ENCODE measurements at regions of chr18 and their contacts with region 1.

Region 1: DNA sequence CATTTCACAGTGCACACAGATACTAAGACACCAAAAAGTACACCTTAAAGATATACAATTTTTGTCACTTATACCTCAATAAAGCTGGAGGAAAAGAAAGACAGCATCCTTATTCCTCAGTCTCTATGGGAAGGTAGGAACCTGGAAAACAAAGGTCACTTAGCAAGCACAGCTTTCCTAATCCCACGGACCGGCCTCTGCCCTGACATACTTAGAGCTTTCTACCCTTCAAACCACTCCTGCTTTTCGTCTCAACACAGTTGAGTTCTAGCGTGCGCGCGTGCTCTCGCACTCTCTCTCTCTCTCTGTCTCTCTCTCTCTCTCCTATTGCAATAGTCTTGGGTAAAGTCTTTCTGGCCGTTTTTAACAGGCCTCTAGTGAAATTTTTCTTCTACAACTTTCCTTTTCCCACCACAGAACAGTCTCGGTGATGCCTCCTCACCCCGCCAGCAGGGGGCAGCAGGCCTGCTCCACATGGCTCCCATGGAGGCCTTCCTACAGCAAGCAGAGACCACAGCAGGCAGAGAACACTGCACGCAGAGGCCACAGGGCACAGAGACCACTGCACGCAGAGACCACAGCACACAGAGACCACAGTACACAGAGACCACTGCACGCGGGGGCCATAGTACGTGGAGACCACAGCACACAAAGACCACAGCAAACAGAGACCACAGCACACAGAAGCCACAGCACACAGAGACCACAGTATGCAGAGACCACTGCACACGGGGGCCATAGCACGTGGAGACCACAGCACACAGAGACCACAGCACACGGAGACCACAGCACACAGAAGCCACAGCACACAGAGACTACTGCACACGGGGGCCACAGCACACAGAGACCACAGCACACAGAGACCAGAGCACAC is 106.9 kb downstream of the FBXO15 start:
- DNase-seq: peak; percentile 32 to 81 (median 62)
- ATAC-seq: peak; percentile 68
- H3K4me3 ChIP-seq: no peak overlapping the region
- H3K4me3 Mint-ChIP-seq: no peak overlapping the region
- H3K27ac ChIP-seq: no peak overlapping the region
- H3K27ac Mint-ChIP-seq: no peak overlapping the region
- H3K4me1 ChIP-seq: no peaks in the 10 kb centered on the region
- H3K4me1 Mint-ChIP-seq: peaks cover 0 to 5% (median 0%) of the 10 kb centered on the region in 7 donors
- H3K27me3 ChIP-seq: no peaks in the 10 kb centered on the region
- H3K27me3 Mint-ChIP-seq: no peaks in the 10 kb centered on the region

Region 2: GRCh38 chr18:73563901-73564472 is 476.7 kb before region 1 on chr18:
- CTCF ChIA-PET with region 1: no interaction called
- POLR2A ChIA-PET with region 1: no interaction called
- intact Hi-C with region 1: no loop called
- DNase-seq: no peak
- ATAC-seq: no peak
- H3K4me3 ChIP-seq: no peak overlapping the region
- H3K4me3 Mint-ChIP-seq: no peak overlapping the region
- H3K27ac ChIP-seq: no peak overlapping the region
- H3K27ac Mint-ChIP-seq: no peak overlapping the region
- H3K4me1 ChIP-seq: no peaks in the 10 kb centered on the region
- H3K4me1 Mint-ChIP-seq: no peaks in the 10 kb centered on the region
- H3K27me3 ChIP-seq: no peaks in the 10 kb centered on the region
- H3K27me3 Mint-ChIP-seq: no peaks in the 10 kb centered on the region

Region 3: GRCh38 chr18:74063023-74063422 is 22.3 kb after region 1 on chr18:
- CTCF ChIA-PET with region 1: no interaction called
- POLR2A ChIA-PET with region 1: no interaction called
- intact Hi-C with region 1: loop called in 1 of 2 experiments (anchors 2 kb)
- DNase-seq: peak in 2 of 9 donors; percentile 17 to 48
- ATAC-seq: no peak
- H3K4me3 ChIP-seq: no peak overlapping the region
- H3K4me3 Mint-ChIP-seq: peak overlapping the region in 2 of 10 donors; percentile 18 to 21
- H3K27ac ChIP-seq: no peak overlapping the region
- H3K27ac Mint-ChIP-seq: peak overlapping the region in 6 of 9 donors; percentile 25 to 73 (median 56)
- H3K4me1 ChIP-seq: peaks cover 0 to 24% of the 10 kb centered on the region in 2 donors
- H3K4me1 Mint-ChIP-seq: peaks cover 0 to 47% (median 37%) of the 10 kb centered on the region in 7 donors
- H3K27me3 ChIP-seq: no peaks in the 10 kb centered on the region
- H3K27me3 Mint-ChIP-seq: peaks cover 0 to 23% (median 0%) of the 10 kb centered on the region in 5 donors

Region 4: GRCh38 chr18:74356959-74357358 is 316.3 kb after region 1 on chr18:
- CTCF ChIA-PET with region 1: no interaction called
- POLR2A ChIA-PET with region 1: no interaction called
- intact Hi-C with region 1: no loop called
- DNase-seq: no peak
- ATAC-seq: no peak
- H3K4me3 ChIP-seq: no peak overlapping the region
- H3K4me3 Mint-ChIP-seq: no peak overlapping the region
- H3K27ac ChIP-seq: no peak overlapping the region
- H3K27ac Mint-ChIP-seq: peak overlapping the region in 1 of 9 donors; percentile 40
- H3K4me1 ChIP-seq: peaks cover 0 to 4% of the 10 kb centered on the region in 2 donors
- H3K4me1 Mint-ChIP-seq: peaks cover 3 to 23% (median 16%) of the 10 kb centered on the region in 7 donors
- H3K27me3 ChIP-seq: no peaks in the 10 kb centered on the region
- H3K27me3 Mint-ChIP-seq: peaks cover 0 to 26% (median 0%) of the 10 kb centered on the region in 5 donors

Measured in naive thymus-derived CD4-positive, alpha-beta T cell (primary cell).